Activated CD8-positive, alpha-beta T cell treated with anti-CD3 and anti-CD28 coated beads, Interleukin-2, amount 10 ng/mL, durations not matched to agents 7 days and 5 days (primary cell): ENCODE measurements at regions of chr5 and their contacts with region 1.

Region 1: DNA sequence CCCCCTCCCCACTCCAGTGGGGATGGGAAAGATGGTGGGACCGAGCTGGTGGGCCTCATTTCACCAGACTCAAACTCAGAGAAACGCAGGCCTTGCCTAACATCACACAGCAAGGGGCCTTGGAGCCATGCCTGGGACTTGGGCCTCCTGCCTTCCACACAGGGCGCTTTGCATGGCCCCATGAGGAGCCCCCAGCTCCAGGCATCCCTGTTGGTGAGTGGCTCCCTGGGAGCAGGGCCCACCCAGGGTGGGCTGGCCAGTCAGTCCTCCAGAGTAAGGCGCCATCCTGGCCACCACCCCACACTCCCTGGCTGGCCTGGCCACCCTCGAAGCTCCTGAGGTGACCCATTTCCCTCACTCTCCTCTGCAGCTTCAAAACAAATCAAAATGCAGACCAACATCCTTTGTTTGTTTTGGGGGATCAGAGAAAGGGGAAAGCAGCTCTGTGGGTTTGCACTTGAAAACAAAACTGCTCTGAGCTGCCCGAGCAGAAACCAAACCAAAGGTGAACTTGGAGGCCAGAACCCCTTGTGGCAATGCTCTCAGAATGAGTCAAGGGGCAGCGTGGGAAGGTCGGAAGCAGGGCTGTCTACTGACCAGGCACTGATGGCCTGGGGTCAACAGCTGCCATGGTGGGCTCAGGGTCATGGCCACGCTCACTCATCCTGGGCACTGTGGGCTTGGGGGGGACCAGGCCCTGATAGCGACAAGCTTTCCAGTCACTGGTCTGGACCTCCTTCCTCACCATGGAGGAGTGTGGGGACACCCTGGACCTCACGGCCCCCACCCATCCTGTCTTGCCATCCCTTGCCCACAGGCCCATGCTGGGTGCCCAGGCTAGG is 37.0 kb upstream of the VDAC1 start:
- DNase-seq: peak; percentile 43
- ATAC-seq: peak; percentile 24
- H3K4me3 Mint-ChIP-seq: no peak overlapping the region
- H3K27ac Mint-ChIP-seq: peak overlapping the region; percentile 39
- H3K4me1 Mint-ChIP-seq: peaks cover 42% of the 10 kb centered on the region
- H3K27me3 Mint-ChIP-seq: no peaks in the 10 kb centered on the region

Region 2: GRCh38 chr5:133936651-133937015 is 105.2 kb before region 1 on chr5:
- CTCF ChIA-PET with region 1: no interaction called
- POLR2A ChIA-PET with region 1: no interaction called
- DNase-seq: no peak
- ATAC-seq: no peak
- H3K4me3 Mint-ChIP-seq: no peak overlapping the region
- H3K27ac Mint-ChIP-seq: no peak overlapping the region
- H3K4me1 Mint-ChIP-seq: peaks cover 8% of the 10 kb centered on the region
- H3K27me3 Mint-ChIP-seq: no peaks in the 10 kb centered on the region

Region 3: DNA sequence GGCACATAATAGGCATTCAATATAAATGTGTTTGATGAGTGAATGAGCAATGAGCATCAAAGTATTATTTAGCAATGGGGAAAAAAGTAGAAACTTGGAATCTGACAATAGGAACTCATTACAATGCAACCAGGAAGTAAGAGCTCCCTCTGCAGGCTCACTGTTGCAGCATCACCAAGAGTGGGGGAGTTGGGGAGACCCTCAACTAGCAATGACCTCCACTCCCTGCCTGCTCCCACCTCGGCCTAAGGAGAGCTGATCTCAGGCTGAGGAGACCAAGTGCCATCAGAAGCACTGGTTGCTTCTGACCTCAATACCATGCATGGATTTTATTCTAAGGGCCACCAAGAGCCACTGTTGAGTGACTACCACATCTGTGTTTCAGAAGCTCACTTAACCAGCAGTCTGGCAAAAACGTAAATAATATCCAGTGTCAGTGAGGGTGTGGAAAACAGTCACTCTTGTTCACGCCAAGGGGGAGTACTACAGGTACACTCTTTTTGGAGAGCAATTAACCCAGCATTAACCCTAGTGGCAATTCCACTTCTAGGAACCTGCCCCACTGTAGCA is 45.0 kb before region 1 on chr5:
- CTCF ChIA-PET with region 1: interaction called, 11 read pairs
- POLR2A ChIA-PET with region 1: no interaction called
- DNase-seq: no peak
- ATAC-seq: no peak
- H3K4me3 Mint-ChIP-seq: no peak overlapping the region
- H3K27ac Mint-ChIP-seq: peak overlapping the region; percentile 67
- H3K4me1 Mint-ChIP-seq: peaks cover 60% of the 10 kb centered on the region
- H3K27me3 Mint-ChIP-seq: no peaks in the 10 kb centered on the region

Region 4: GRCh38 chr5:134026521-134027268 is 15.1 kb before region 1 on chr5:
- CTCF ChIA-PET with region 1: interaction called, 47 read pairs
- POLR2A ChIA-PET with region 1: no interaction called
- DNase-seq: peak; percentile 68
- ATAC-seq: peak; percentile 96
- H3K4me3 Mint-ChIP-seq: no peak overlapping the region
- H3K27ac Mint-ChIP-seq: no peak overlapping the region
- H3K4me1 Mint-ChIP-seq: no peaks in the 10 kb centered on the region
- H3K27me3 Mint-ChIP-seq: peaks cover 9% of the 10 kb centered on the region

Region 5: GRCh38 chr5:134070725-134071613 is 29.2 kb after region 1 on chr5:
- CTCF ChIA-PET with region 1: interaction called, 42 read pairs
- POLR2A ChIA-PET with region 1: interaction called, 4 read pairs
- DNase-seq: no peak
- ATAC-seq: peak; percentile 45
- H3K4me3 Mint-ChIP-seq: peak overlapping the region; percentile 37
- H3K27ac Mint-ChIP-seq: peak overlapping the region; percentile 68
- H3K4me1 Mint-ChIP-seq: peaks cover 53% of the 10 kb centered on the region
- H3K27me3 Mint-ChIP-seq: peaks cover 3% of the 10 kb centered on the region

Region 6: DNA sequence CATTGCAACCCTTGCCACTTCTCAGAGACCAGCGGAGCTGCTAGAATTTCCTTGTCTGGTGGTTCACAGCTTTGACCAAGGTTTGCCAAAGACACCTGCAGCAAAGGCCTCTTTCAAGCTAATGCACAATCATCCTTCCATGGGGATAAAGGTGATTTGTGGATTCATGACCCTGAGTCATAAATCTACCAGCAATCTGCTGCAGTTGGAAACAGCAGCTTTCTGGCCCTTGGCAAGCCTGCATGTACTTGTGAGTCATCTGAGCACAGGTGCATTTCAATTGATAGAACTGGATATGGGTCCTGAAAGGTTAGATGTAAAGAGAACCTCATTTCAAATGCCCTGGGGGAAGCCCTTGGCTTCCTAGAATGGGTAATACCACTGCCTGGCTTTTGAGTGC is 51.1 kb after region 1 on chr5:
- CTCF ChIA-PET with region 1: interaction called, 71 read pairs
- POLR2A ChIA-PET with region 1: no interaction called
- DNase-seq: no peak
- ATAC-seq: no peak
- H3K4me3 Mint-ChIP-seq: no peak overlapping the region
- H3K27ac Mint-ChIP-seq: peak overlapping the region; percentile 18
- H3K4me1 Mint-ChIP-seq: peaks cover 77% of the 10 kb centered on the region
- H3K27me3 Mint-ChIP-seq: peaks cover 4% of the 10 kb centered on the region

Region 7: DNA sequence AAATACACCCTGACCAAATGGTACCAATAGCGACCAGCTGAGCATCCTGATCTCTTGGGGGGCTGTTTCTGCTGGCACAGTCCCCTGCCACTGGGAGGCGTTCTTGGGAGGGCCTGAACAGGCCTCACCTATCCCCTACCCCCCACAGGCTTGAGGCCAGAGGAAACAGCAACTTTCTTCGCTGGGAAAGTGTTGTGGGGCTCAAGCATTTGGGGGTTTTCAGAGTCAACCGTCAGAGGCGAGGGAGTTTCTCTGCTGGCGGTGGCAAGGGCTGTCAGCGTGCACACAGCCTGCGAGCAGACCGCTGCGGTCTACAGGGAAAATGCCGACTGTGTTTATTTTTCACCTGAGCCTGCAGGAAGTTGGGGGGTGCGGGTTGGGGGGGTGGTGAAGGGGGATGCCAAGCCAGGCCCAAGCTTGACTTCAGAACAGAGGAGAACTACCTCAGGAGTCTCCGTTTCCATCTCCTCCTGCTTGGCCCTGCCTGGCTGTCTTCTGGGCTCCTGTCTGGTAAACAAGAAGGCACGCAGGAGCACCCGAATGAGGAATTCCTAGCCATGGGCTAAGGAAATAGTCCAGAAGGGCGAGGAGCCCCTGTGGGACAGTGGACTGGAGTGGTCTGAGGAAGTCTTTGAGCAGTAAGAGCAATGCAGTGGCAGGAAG is 90.7 kb after region 1 on chr5:
- CTCF ChIA-PET with region 1: interaction called, 618 read pairs
- POLR2A ChIA-PET with region 1: interaction called, 8 read pairs
- DNase-seq: peak; percentile 89
- ATAC-seq: peak; percentile 68
- H3K4me3 Mint-ChIP-seq: peak overlapping the region; percentile 55
- H3K27ac Mint-ChIP-seq: peak overlapping the region; percentile 91
- H3K4me1 Mint-ChIP-seq: peaks cover 97% of the 10 kb centered on the region
- H3K27me3 Mint-ChIP-seq: no peaks in the 10 kb centered on the region

Region 8: GRCh38 chr5:134161513-134162395 is 120.0 kb after region 1 on chr5:
- CTCF ChIA-PET with region 1: interaction called, 618 read pairs
- POLR2A ChIA-PET with region 1: no interaction called
- DNase-seq: no peak
- ATAC-seq: no peak
- H3K4me3 Mint-ChIP-seq: no peak overlapping the region
- H3K27ac Mint-ChIP-seq: no peak overlapping the region
- H3K4me1 Mint-ChIP-seq: peaks cover 5% of the 10 kb centered on the region
- H3K27me3 Mint-ChIP-seq: no peaks in the 10 kb centered on the region